CD4-positive, alpha-beta memory T cell (primary cell): ENCODE measurements at regions of chr20 and their contacts with region 1.

Region 1: DNA sequence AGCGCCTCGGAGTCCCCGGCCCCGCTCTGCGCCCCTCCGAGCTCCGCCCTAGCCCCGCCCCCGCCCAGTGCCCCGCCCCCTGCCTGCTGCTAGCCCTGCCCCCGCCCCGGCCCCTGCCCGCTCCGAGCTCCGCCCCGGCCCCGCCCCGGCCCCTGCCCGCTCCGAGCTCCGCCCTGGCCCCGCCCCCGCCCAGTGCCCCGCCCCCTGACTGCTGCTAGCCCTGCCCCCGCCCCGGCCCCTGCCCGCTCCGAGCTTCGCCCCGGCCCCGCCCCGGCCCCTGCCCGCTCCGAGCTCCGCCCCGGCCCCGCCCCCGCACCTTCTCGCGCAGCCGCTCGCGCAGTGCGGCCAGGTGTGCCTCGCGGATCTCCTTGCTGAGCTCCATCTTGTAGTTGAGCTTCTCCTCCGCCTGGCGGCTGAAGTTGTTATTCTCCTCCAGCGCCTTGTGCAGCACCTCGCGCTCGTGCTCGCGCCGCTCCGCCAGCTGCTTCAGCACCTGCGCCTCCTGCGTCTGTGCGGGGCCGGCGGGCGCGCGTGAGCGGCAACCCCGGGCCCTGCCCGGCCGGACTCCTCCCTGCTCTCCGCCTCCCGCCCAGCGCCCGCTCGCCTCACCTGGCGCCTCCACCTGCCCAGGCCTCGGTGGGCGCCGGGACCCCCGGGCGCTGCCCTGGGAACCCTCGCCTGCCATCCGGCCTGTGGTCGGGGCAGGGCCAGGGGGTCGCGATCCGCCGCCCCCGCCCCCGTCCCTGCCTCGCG is 11.3 kb downstream of the STMN3 start:
- DNase-seq: peak; percentile 96 to 98 (median 97)
- H3K4me3 ChIP-seq: peak overlapping the region; percentile 57 to 92
- H3K4me3 Mint-ChIP-seq: peak overlapping the region; percentile 61 to 90 (median 80)
- H3K27ac ChIP-seq: peak overlapping the region; percentile 76
- H3K27ac Mint-ChIP-seq: peak overlapping the region in 4 of 7 donors; percentile 47 to 89 (median 82)
- H3K4me1 ChIP-seq: peaks cover 31% of the 10 kb centered on the region
- H3K4me1 Mint-ChIP-seq: peaks cover 13 to 43% (median 28%) of the 10 kb centered on the region in 4 donors
- H3K27me3 ChIP-seq: no peaks in the 10 kb centered on the region
- H3K27me3 Mint-ChIP-seq: peaks cover 0 to 2% of the 10 kb centered on the region in 2 donors

Region 2: DNA sequence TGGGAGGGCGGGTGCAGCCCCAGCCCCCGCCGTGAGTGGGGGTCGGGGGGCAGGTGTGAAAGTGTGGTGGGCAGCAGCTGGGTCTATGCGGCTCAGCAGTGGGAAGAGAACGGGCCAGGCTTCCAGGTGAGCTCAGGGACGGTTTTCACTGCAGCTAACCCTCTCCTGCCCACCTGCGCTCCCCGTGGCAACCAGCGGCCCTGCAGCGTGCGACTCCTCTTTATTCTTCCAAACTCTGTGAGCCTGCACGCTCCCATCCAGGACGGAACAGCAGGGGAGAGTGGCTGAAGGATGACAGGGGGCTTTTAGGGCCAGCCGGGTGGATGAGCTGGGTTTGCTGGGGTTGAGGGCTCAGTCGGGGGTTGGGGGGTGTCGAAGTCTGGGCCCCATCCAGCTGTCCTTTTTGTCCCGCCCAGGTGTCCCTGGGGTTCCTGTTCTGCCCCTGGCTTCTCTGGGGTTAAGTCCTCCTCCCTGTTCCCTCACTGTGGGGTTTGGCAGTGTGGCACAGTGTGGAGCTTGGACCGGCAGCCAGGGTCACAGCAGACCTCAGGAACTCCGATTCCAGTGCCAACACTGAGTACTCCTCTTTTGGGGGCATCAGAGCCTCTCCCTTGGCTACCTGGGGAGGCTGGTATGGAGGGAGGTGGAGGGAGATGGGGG is 407.1 kb before region 1 on chr20:
- CTCF ChIA-PET with region 1: no interaction called
- POLR2A ChIA-PET with region 1: no interaction called
- intact Hi-C with region 1: no loop called
- DNase-seq: peak in 1 of 5 donors; percentile 22
- H3K4me3 ChIP-seq: no peak overlapping the region
- H3K4me3 Mint-ChIP-seq: peak overlapping the region in 1 of 8 donors; percentile 41
- H3K27ac ChIP-seq: no peak overlapping the region
- H3K27ac Mint-ChIP-seq: peak overlapping the region in 1 of 7 donors; percentile 62
- H3K4me1 ChIP-seq: no peaks in the 10 kb centered on the region
- H3K4me1 Mint-ChIP-seq: peaks cover 0 to 19% (median 0%) of the 10 kb centered on the region in 4 donors
- H3K27me3 ChIP-seq: peaks cover 8% of the 10 kb centered on the region
- H3K27me3 Mint-ChIP-seq: peaks cover 12 to 26% of the 10 kb centered on the region in 2 donors

Region 3: DNA sequence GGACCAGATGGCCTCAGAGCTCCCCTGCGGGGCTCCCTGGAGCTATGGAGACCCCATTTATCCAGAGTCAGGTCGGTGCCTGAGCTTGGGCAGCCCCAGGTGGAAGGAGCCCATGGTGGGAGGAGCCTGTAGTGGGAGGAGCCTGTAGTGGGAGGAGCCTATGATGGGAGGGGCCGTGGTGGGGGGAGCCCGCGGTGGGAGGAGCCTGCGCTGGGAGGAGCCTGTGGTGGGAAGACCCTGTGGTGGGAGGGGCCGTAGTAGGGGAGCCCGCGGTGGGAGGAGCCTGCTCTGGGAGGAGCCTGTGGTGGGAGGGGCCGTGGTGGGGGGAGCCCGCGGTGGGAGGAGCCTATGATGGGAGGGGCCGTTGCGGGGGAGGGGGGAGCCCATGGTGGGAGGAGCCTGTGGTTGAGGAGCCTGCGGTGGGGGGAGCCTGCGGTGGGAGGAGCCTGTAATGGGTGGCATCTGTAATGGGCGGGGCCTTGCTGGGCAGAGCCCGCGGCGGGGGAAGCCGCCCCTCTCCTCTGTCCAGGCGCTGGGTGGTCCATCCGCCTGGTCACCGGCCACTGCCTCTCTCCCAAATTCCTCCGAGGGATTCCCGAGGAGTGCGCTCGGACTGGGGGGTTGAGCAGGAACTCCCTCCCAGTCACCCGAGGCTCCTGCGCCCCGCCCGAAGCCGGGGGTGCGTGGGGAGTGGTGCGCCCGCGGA is 88.6 kb before region 1 on chr20:
- CTCF ChIA-PET with region 1: no interaction called
- POLR2A ChIA-PET with region 1: interaction called, 5 read pairs
- intact Hi-C with region 1: loop called (anchors 1 kb)
- DNase-seq: peak; percentile 87 to 93 (median 89)
- H3K4me3 ChIP-seq: peak overlapping the region; percentile 23 to 66
- H3K4me3 Mint-ChIP-seq: peak overlapping the region; percentile 68 to 92 (median 76)
- H3K27ac ChIP-seq: peak overlapping the region; percentile 69
- H3K27ac Mint-ChIP-seq: peak overlapping the region; percentile 93 to 98 (median 97)
- H3K4me1 ChIP-seq: peaks cover 22% of the 10 kb centered on the region
- H3K4me1 Mint-ChIP-seq: peaks cover 5 to 27% (median 14%) of the 10 kb centered on the region in 4 donors
- H3K27me3 ChIP-seq: no peaks in the 10 kb centered on the region
- H3K27me3 Mint-ChIP-seq: peaks cover 0 to 6% of the 10 kb centered on the region in 2 donors

Region 4: GRCh38 chr20:63580796-63581461 is 61.0 kb before region 1 on chr20:
- CTCF ChIA-PET with region 1: interaction called, 18 read pairs
- POLR2A ChIA-PET with region 1: interaction called, 11 read pairs
- intact Hi-C with region 1: loop called (anchors 1 kb)
- DNase-seq: peak; percentile 68 to 82 (median 78)
- H3K4me3 ChIP-seq: no peak overlapping the region
- H3K4me3 Mint-ChIP-seq: peak overlapping the region in 1 of 8 donors; percentile 43
- H3K27ac ChIP-seq: no peak overlapping the region
- H3K27ac Mint-ChIP-seq: peak overlapping the region in 2 of 7 donors; percentile 7 to 16
- H3K4me1 ChIP-seq: peaks cover 3% of the 10 kb centered on the region
- H3K4me1 Mint-ChIP-seq: peaks cover 1 to 13% (median 6%) of the 10 kb centered on the region in 4 donors
- H3K27me3 ChIP-seq: no peaks in the 10 kb centered on the region
- H3K27me3 Mint-ChIP-seq: no peaks in the 10 kb centered on the region

Region 5: DNA sequence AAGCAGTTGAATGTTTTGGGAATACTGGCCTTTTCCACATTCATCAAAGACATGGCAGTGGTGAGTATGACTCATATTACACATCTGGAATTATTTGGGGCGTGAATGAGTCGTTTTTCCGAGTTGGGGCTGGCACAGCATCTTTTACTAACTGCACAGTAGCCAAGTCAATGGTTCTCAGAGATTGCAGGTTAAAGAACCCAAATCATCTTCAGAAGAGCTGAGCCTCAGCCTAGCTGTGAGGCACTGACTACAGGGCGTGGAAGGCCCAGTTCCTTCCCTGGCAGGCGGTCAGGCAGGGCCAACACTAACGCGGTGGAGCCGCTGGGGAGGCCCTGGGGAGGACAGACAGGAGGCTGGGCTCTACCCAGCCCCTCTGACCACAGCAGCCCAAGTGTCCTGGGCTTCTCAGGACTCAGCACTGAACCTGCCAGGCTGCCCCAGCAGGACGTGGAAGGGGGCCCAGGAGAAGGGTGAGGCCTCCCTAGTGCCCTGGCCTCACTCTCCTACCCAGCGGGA is 47.9 kb before region 1 on chr20:
- CTCF ChIA-PET with region 1: no interaction called
- POLR2A ChIA-PET with region 1: no interaction called
- intact Hi-C with region 1: no loop called
- DNase-seq: no peak
- H3K4me3 ChIP-seq: no peak overlapping the region
- H3K4me3 Mint-ChIP-seq: no peak overlapping the region
- H3K27ac ChIP-seq: no peak overlapping the region
- H3K27ac Mint-ChIP-seq: no peak overlapping the region
- H3K4me1 ChIP-seq: no peaks in the 10 kb centered on the region
- H3K4me1 Mint-ChIP-seq: peaks cover 0 to 2% (median 0%) of the 10 kb centered on the region in 4 donors
- H3K27me3 ChIP-seq: no peaks in the 10 kb centered on the region
- H3K27me3 Mint-ChIP-seq: no peaks in the 10 kb centered on the region

Region 6: DNA sequence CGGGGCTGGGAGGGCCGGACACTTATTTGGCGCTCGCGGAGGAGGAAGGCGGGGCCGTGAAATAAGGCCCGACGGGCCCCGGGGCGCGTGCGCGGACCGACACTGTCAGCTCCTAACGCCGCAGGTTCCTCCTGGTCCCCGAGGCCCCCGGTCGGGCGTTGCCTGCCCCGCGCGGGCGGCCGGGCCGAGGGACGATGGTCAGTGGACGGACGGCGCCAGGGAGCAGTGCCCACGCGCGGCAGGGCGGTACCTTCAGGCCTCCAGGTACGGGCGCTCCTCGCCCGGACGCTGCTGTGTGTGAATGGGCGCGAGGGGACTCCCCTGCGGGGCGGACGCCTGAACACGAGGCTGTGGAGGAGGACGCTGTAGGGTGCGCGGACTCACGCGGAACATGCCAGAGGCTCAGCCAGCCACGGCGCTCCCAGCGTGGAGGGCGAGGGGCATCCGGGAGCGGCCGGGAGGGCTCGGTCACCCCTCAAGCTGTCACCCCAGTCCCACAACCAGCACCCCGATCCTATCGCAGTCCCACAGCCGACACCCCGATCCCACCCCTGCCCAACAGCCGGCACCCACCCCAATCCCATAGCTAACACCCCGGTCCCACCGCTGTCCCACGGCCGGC is 14.7 kb before region 1 on chr20:
- CTCF ChIA-PET with region 1: interaction called, 20 read pairs
- POLR2A ChIA-PET with region 1: interaction called, 658 read pairs
- intact Hi-C with region 1: loop called (anchors 1 kb)
- DNase-seq: peak; percentile 92 to 99 (median 96)
- H3K4me3 ChIP-seq: peak overlapping the region; percentile 91 to 95
- H3K4me3 Mint-ChIP-seq: peak overlapping the region; percentile 94 to 99 (median 96)
- H3K27ac ChIP-seq: peak overlapping the region; percentile 86
- H3K27ac Mint-ChIP-seq: peak overlapping the region; percentile 57 to 96 (median 90)
- H3K4me1 ChIP-seq: peaks cover 41% of the 10 kb centered on the region
- H3K4me1 Mint-ChIP-seq: peaks cover 19 to 54% (median 37%) of the 10 kb centered on the region in 4 donors
- H3K27me3 ChIP-seq: no peaks in the 10 kb centered on the region
- H3K27me3 Mint-ChIP-seq: no peaks in the 10 kb centered on the region

Region 7: DNA sequence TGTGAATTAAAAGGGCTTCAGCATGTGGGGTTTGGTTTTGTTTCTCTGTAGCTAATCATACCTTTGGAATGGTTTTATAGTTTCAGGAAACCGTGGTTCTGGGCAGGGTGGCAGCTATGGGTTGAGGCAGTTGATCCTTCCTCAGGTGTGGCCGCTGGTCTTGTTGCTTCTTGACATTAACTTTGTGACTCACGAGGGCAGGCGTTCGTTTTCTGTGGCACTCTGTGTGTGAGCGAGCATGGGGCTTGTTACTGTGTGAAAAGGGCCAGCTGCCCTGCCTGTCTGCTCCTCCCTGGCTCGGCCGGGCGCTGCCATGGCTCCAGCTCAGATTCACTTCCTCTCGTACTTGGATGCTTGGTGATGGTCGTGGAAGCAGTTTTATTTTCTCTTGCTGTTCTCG is 269.2 kb after region 1 on chr20:
- CTCF ChIA-PET with region 1: no interaction called
- POLR2A ChIA-PET with region 1: no interaction called
- intact Hi-C with region 1: no loop called
- DNase-seq: no peak
- H3K4me3 ChIP-seq: no peak overlapping the region
- H3K4me3 Mint-ChIP-seq: peak overlapping the region in 2 of 8 donors; percentile 32 to 37
- H3K27ac ChIP-seq: no peak overlapping the region
- H3K27ac Mint-ChIP-seq: peak overlapping the region in 6 of 7 donors; percentile 29 to 85 (median 74)
- H3K4me1 ChIP-seq: peaks cover 28% of the 10 kb centered on the region
- H3K4me1 Mint-ChIP-seq: peaks cover 24 to 54% (median 41%) of the 10 kb centered on the region in 4 donors
- H3K27me3 ChIP-seq: no peaks in the 10 kb centered on the region
- H3K27me3 Mint-ChIP-seq: no peaks in the 10 kb centered on the region